Gastrocnemius medialis (tissue), 4 donors: ENCODE measurements at regions of chr14 and their contacts with region 1.

Region 1: DNA sequence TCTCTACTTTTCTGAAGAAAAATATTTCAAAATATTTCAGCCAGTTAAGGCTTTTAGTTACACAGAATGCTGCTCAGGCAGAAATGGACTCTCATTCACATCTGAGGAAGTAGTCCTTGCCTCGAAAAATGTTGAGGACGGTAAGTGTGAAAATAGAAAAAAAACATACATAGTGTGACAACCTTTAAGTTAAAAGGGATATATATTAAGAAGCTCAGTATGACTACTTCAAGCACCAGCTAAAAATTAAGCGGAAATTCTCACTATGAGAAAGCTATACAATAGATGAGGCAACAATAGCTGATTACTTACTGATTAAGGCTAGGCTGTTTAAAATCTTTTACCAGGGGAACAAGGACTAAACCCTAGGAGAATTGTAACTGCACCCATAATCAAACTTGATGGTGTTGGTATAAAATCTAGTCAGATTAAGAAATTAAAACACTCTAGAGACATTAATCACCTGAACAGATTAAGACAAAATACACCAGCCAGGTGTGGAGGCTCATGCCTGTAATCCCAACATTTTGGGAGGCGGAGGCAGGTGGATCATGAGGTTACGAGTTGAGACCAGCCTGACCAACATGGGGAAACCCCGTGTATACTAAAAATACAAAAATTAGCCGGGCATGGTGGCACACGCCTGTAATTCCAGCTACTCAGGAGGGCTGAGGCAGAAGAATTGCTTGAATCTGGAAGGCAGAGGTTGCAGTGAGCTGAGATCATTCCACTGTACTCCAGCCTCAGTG is 53.9 kb downstream of the HNRNPC start:
- DNase-seq: no peak
- ATAC-seq: no peak
- H3K4me3 ChIP-seq: no peak overlapping the region
- H3K27ac ChIP-seq: peak overlapping the region in 1 of 4 donors; percentile 13
- H3K4me1 ChIP-seq: peaks cover 21 to 29% of the 10 kb centered on the region in 2 donors
- H3K27me3 ChIP-seq: no peaks in the 10 kb centered on the region
- CTCF ChIP-seq: no peak
- POLR2A ChIP-seq: no peak

Region 2: DNA sequence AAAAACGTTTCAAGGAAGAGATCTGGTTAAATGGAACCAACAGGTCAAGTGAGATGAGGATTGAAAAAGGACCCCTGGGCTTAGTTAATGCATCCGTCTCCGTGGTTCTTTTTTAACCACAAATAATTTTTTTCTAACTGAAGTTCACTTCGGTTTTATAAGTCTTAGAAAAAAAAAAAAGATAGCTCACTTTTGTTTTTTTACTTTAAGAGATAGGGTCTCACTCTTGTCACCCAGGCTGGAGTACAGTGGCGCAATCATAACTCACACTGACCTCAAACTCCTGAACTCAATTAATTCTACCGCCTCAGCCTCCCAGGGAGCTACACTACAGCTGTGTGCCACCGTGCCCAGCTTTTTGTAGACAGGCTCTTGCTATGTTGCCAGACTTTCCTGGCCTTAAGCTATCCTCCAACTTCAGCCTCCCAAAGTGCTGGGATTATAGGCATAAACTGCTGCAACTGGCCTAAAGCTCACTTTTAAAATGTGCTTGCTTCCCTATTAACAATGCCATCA is 42.1 kb after region 1 on chr14:
- in situ Hi-C with region 1: no loop called
- intact Hi-C with region 1: loop called (anchors 5 kb)
- DNase-seq: no peak
- ATAC-seq: peak in 1 of 2 donors; percentile 51
- H3K4me3 ChIP-seq: no peak overlapping the region
- H3K27ac ChIP-seq: peak overlapping the region in 3 of 4 donors; percentile 19 to 35 (median 19)
- H3K4me1 ChIP-seq: peaks cover 64 to 73% of the 10 kb centered on the region in 2 donors
- H3K27me3 ChIP-seq: no peaks in the 10 kb centered on the region
- CTCF ChIP-seq: no peak
- POLR2A ChIP-seq: no peak

Region 3: DNA sequence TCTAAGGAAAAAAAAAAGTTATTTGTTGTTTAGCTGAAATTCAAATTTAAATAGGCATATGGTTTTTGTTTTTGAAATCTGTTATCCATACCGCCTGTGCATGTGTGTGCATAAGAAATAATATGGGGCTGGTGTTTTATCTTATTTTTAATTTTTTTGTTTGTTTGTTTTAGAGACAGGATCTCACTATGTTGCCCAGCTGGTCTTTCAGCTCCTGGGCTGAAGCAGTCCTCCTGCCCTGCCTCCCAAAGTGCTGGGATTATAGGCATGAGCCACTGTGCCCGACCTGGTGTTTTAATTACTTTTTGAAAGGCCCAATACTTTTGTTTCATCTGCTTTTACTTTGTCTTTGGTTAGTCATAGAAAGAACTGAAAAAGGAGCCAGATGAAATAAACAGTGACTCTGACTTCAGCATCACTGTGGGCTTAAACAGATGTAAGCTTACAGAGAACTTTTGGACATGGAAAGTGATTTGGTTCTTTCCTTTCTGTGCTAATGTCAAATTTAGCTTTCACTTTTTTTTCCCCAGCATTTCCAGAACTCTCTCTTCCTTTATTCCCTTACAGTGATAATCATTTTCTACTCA is 131.3 kb after region 1 on chr14:
- in situ Hi-C with region 1: no loop called
- intact Hi-C with region 1: no loop called
- DNase-seq: no peak
- ATAC-seq: no peak
- H3K4me3 ChIP-seq: no peak overlapping the region
- H3K27ac ChIP-seq: no peak overlapping the region
- H3K4me1 ChIP-seq: no peaks in the 10 kb centered on the region
- H3K27me3 ChIP-seq: no peaks in the 10 kb centered on the region
- CTCF ChIP-seq: no peak
- POLR2A ChIP-seq: no peak

Region 4: GRCh38 chr14:21408147-21408546 is 192.8 kb after region 1 on chr14:
- in situ Hi-C with region 1: no loop called
- intact Hi-C with region 1: no loop called
- DNase-seq: no peak
- ATAC-seq: no peak
- H3K4me3 ChIP-seq: no peak overlapping the region
- H3K27ac ChIP-seq: no peak overlapping the region
- H3K4me1 ChIP-seq: no peaks in the 10 kb centered on the region
- H3K27me3 ChIP-seq: no peaks in the 10 kb centered on the region
- CTCF ChIP-seq: no peak
- POLR2A ChIP-seq: no peak